HepG2 (cell line): ENCODE measurements at regions of chr5 and their contacts with region 1.

Region 1: DNA sequence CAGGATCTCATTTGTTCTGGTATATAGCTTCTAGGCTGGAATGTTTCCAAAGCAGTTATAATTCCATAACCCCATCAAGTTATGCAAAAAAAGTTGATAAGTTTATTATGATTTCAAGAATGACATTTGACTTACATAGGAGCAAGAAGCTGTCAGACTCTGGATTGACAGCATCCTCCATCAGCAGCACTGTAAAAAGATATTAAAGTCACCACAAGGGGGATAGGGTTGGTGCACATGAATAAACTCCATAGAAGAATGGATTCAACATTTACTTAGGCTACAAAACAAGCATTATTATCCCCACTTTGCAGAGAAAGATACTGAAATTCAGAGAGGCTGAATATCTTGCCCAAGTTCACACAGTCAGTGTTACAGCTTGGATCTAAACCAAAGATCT is 208.9 kb upstream of the SLC30A5 start:
- DNase-seq: peak; percentile 13
- ATAC-seq: peak; percentile 65; the same call in 2 of the 3 replicates
- H3K4me3 ChIP-seq: no peak overlapping the region
- H3K27ac ChIP-seq: no peak overlapping the region
- H3K4me1 ChIP-seq: no peaks in the 10 kb centered on the region
- H3K27me3 ChIP-seq: no peaks in the 10 kb centered on the region
- CTCF ChIP-seq: 0 out of 2 replicates have a peak, but pooled peaks have one; percentile 12
- EP300 ChIP-seq: no peak
- POLR2A ChIP-seq: no peak
- RAD21 ChIP-seq: no peak

Region 2: GRCh38 chr5:68456756-68457217 is 428.1 kb before region 1 on chr5:
- CTCF ChIA-PET with region 1: no interaction called
- POLR2A ChIA-PET with region 1: no interaction called
- in situ Hi-C with region 1: no loop called
- intact Hi-C with region 1: no loop called
- DNase-seq: peak; percentile 20
- ATAC-seq: peak; percentile 38; the same call in 1 of the 3 replicates
- H3K4me3 ChIP-seq: no peak overlapping the region
- H3K27ac ChIP-seq: no peak overlapping the region
- H3K4me1 ChIP-seq: peaks cover 48% of the 10 kb centered on the region
- H3K27me3 ChIP-seq: peaks cover 0 to 10% of the 10 kb centered on the region in 2 experiments; a peak in 1 of 5 replicates
- CTCF ChIP-seq: no peak
- EP300 ChIP-seq: no peak
- POLR2A ChIP-seq: no peak
- RAD21 ChIP-seq: no peak

Region 3: GRCh38 chr5:68749631-68750030 is 135.3 kb before region 1 on chr5:
- CTCF ChIA-PET with region 1: no interaction called
- POLR2A ChIA-PET with region 1: no interaction called
- in situ Hi-C with region 1: no loop called
- intact Hi-C with region 1: no loop called
- DNase-seq: no peak
- ATAC-seq: no peak
- H3K4me3 ChIP-seq: no peak overlapping the region
- H3K27ac ChIP-seq: no peak overlapping the region
- H3K4me1 ChIP-seq: no peaks in the 10 kb centered on the region
- H3K27me3 ChIP-seq: no peaks in the 10 kb centered on the region; a peak in 1 of 5 replicates
- CTCF ChIP-seq: no peak
- EP300 ChIP-seq: no peak
- POLR2A ChIP-seq: no peak
- RAD21 ChIP-seq: no peak

Region 4: DNA sequence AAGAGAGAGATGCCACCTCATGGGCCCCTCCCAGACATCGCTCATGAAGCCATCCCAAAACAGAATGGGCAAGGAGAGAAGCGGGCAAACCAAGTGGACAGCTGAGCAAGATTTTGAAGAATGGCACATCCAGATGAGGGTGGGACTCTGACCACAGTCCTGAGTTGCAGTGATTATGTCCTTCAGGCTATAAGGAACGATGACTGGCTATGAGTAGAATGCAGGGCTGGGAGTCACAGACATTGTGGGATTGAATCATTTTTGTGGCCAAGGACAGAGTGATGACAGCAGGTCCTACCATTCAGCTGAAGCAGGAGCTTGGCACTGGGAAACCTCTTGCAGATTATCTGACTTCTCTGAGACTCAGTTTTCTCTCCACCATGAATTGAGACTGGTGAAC is 36.8 kb before region 1 on chr5:
- CTCF ChIA-PET with region 1: no interaction called
- POLR2A ChIA-PET with region 1: no interaction called
- in situ Hi-C with region 1: no loop called
- intact Hi-C with region 1: no loop called
- DNase-seq: no peak
- ATAC-seq: no peak
- H3K4me3 ChIP-seq: no peak overlapping the region
- H3K27ac ChIP-seq: no peak overlapping the region
- H3K4me1 ChIP-seq: no peaks in the 10 kb centered on the region
- H3K27me3 ChIP-seq: no peaks in the 10 kb centered on the region
- CTCF ChIP-seq: no peak
- EP300 ChIP-seq: no peak
- POLR2A ChIP-seq: no peak
- RAD21 ChIP-seq: no peak

Region 5: DNA sequence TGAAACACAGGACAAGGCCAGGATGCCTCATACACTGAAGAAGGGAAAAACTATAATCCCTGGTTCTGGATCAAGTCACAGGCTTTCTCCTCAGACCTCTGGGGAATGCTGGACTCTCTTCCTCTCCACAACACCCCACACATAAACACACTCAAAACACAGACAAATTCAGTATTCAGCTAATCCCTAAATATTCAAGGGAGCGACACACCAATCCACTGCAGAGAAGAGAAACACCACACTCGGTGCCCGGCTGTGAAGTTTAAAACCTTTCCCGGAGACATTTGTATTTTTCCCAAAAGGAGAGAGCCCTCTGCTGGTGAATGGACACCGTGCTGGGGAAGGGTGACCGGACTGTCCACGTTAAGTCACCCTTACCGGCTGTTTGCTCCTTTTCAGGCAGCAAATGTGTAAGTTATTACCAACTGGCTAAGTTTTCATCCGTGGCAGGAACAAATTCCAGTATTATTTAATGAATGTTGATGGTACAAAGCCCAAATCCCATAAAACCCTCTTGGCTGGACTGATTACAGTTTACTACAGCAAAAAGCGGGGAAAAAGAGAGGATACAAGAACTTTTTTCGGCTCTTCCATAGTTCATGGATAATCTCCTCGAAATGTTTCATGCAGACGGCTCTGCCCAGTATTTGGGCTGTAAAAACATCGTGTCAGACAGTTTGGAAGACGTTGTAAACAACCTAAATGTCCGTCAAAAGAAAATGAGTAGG is 78.0 kb after region 1 on chr5:
- CTCF ChIA-PET with region 1: interaction called, 11 read pairs
- POLR2A ChIA-PET with region 1: no interaction called
- in situ Hi-C with region 1: no loop called
- intact Hi-C with region 1: loop called (anchors 1 kb)
- DNase-seq: peak; percentile 46
- ATAC-seq: peak; percentile 96
- H3K4me3 ChIP-seq: no peak overlapping the region
- H3K27ac ChIP-seq: no peak overlapping the region
- H3K4me1 ChIP-seq: peaks cover 2% of the 10 kb centered on the region
- H3K27me3 ChIP-seq: peaks cover 0 to 4% of the 10 kb centered on the region in 2 experiments; a peak in 1 of 5 replicates
- CTCF ChIP-seq: peak; percentile 85
- EP300 ChIP-seq: no peak
- POLR2A ChIP-seq: no peak
- RAD21 ChIP-seq: peak; percentile 48; the same call in 1 of the 2 replicates